Tibial artery (tissue), 4 donors: ENCODE measurements at regions of chrX and their contacts with region 1.

Region 1: GRCh38 chrX:133523081-133523487 is 107.8 kb upstream of the GPC4 start:
- DNase-seq: peak in 1 of 2 donors; percentile 22
- H3K4me3 ChIP-seq: no peak overlapping the region
- H3K27ac ChIP-seq: no peak overlapping the region
- H3K4me1 ChIP-seq: peaks cover 0 to 8% (median 0%) of the 10 kb centered on the region in 4 donors
- H3K27me3 ChIP-seq: no peaks in the 10 kb centered on the region
- CTCF ChIP-seq: no peak

Region 2: DNA sequence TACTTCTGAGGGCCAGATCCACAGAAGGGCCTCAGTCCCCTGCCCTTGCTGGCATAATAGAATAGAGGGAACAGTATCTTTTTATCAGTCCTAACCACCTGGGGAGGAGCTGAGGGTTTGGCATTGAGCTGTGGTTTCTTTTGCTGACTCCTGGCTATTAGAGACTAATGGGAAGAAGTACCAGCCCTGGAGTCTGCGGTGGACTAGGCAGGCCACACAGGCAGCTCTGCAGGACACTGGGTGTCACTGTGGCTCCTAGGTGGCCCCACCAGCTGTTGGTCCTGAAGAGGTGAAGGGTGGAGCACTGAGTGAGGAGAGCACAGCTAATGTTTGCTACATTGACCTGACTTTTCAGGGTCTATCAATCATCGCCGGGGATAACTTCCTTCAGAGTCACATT is 55.0 kb before region 1 on chrX:
- intact Hi-C with region 1: loop called (anchors 10 kb)
- DNase-seq: no peak
- H3K4me3 ChIP-seq: no peak overlapping the region
- H3K27ac ChIP-seq: no peak overlapping the region
- H3K4me1 ChIP-seq: no peaks in the 10 kb centered on the region
- H3K27me3 ChIP-seq: no peaks in the 10 kb centered on the region
- CTCF ChIP-seq: no peak